MCF 10A (cell line): ENCODE measurements at regions of chr3 and their contacts with region 1.

Region 1: GRCh38 chr3:11271986-11272904 is at the start of gene ATG7:
- DNase-seq: peak; percentile 97
- H3K4me3 Mint-ChIP-seq: peak within 1 kb of the TSS; percentile 99
- H3K27ac Mint-ChIP-seq: peak within 1 kb of the TSS; percentile 99
- H3K4me1 Mint-ChIP-seq: peaks cover 42% of the 10 kb centered on the region
- H3K27me3 Mint-ChIP-seq: no peaks in the 10 kb centered on the region
- CTCF ChIP-seq: no peak
- total RNA-seq, gene ATG7: 52.3 and 54.0 TPM in 2 replicates

Region 2: DNA sequence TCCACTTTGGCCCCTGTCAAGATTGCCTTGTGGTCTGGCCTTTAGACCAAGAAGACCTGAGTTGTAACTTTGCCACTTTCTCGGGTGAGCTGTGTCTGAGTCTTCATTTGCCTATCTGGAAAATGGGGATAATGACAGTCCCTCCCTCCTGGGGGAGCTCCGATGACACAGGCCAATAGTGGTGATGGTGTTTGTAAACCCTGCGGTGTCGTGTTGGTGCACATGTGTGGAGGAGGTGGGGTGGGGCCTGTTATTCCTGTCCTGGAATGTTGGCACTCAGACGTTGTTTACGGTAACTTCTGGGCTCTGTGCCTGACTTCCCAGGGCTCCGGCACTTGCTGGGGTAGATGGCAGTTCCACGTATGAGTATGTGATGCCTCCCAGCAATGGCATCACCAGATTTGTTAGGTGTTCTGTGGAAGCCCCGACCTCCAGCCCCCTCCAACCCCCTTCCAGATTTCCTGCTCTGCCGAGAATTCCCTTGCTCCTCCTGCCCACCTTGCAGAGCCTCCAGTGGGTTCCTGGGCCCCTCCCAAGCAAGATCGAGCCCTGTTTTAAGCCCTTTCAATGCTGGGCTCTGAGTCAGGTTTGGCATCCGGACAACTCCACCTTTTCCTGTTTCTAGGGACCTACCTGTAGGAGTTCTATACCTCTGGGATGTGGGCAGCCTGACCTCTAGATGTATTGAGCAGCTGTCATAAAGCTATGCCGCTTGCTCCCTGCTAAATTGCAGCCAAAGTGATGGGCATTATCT is 86.5 kb before region 1 on chr3:
- CTCF ChIA-PET with region 1: no interaction called
- POLR2A ChIA-PET with region 1: interaction called, 8 read pairs
- intact Hi-C with region 1: loop called (anchors 5 kb)
- DNase-seq: peak; percentile 99
- H3K4me3 Mint-ChIP-seq: peak overlapping the region; percentile 75
- H3K27ac Mint-ChIP-seq: peak overlapping the region; percentile 100
- H3K4me1 Mint-ChIP-seq: peaks cover 36% of the 10 kb centered on the region
- H3K27me3 Mint-ChIP-seq: no peaks in the 10 kb centered on the region
- CTCF ChIP-seq: no peak

Region 3: GRCh38 chr3:11236595-11237461 is 35.4 kb before region 1 on chr3:
- CTCF ChIA-PET with region 1: interaction called, 5 read pairs
- POLR2A ChIA-PET with region 1: interaction called, 35 read pairs
- intact Hi-C with region 1: loop called (anchors 5 kb)
- DNase-seq: peak; percentile 82
- H3K4me3 Mint-ChIP-seq: no peak overlapping the region
- H3K27ac Mint-ChIP-seq: peak overlapping the region; percentile 49
- H3K4me1 Mint-ChIP-seq: peaks cover 26% of the 10 kb centered on the region
- H3K27me3 Mint-ChIP-seq: no peaks in the 10 kb centered on the region
- CTCF ChIP-seq: peak; percentile 95

Region 4: GRCh38 chr3:11244126-11244677 is 28.0 kb before region 1 on chr3:
- CTCF ChIA-PET with region 1: interaction called, 5 read pairs
- POLR2A ChIA-PET with region 1: interaction called, 35 read pairs
- intact Hi-C with region 1: loop called (anchors 5 kb)
- DNase-seq: peak; percentile 38
- H3K4me3 Mint-ChIP-seq: no peak overlapping the region
- H3K27ac Mint-ChIP-seq: peak overlapping the region; percentile 63
- H3K4me1 Mint-ChIP-seq: peaks cover 11% of the 10 kb centered on the region
- H3K27me3 Mint-ChIP-seq: no peaks in the 10 kb centered on the region
- CTCF ChIP-seq: no peak

Region 5: GRCh38 chr3:11282250-11283138 is 10.2 kb after region 1 on chr3:
- CTCF ChIA-PET with region 1: interaction called, 3 read pairs
- POLR2A ChIA-PET with region 1: interaction called, 82 read pairs
- intact Hi-C with region 1: no loop called
- DNase-seq: no peak
- H3K4me3 Mint-ChIP-seq: no peak overlapping the region
- H3K27ac Mint-ChIP-seq: no peak overlapping the region
- H3K4me1 Mint-ChIP-seq: peaks cover 17% of the 10 kb centered on the region
- H3K27me3 Mint-ChIP-seq: no peaks in the 10 kb centered on the region
- CTCF ChIP-seq: no peak

Region 6: DNA sequence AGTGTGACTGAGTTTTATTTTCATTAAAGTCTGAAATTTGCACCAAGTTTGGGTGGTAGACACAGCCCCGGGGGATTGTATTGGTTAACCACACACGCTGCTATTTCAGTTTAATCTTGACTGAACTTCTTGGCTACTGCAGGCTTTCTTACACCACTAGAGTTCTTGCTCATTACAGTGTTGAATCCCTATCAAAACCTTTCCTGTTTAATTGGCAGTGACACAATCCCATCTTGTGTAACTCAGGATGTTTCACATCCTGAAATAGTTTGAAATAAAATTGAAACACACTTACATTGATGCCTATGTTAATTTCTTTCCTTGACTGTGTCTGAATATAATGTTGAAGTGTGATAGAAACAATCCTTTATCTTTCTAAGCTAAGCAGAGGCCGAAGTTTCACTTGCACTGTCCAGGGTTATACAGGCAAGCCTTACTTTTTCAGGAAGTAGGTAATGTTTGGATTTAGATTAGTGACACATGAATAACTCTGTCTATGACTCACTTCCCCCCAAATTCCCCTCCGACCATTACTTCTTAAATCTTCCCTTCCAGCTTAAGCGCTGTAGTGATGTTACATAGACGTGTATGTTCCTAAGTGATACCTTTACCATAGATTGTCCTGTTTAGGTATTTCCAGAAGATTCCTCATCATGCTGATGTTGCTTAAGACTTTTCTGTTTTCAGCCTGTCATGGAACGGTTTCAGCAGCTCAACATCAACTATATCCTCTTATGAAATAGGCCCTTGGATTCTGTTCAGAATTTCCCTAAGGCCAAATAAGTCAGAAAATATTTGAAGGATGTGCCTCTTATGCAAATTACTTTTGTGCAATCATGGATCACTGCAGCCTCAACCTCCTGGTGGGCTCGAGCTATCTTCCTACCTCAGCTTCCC is 16.8 kb after region 1 on chr3:
- CTCF ChIA-PET with region 1: interaction called, 4 read pairs
- POLR2A ChIA-PET with region 1: interaction called, 82 read pairs
- intact Hi-C with region 1: loop called (anchors 1 kb)
- DNase-seq: peak; percentile 93
- H3K4me3 Mint-ChIP-seq: peak overlapping the region; percentile 40
- H3K27ac Mint-ChIP-seq: peak overlapping the region; percentile 89
- H3K4me1 Mint-ChIP-seq: peaks cover 39% of the 10 kb centered on the region
- H3K27me3 Mint-ChIP-seq: no peaks in the 10 kb centered on the region
- CTCF ChIP-seq: no peak

Region 7: GRCh38 chr3:11415099-11415498 is 142.9 kb after region 1 on chr3:
- CTCF ChIA-PET with region 1: no interaction called
- POLR2A ChIA-PET with region 1: no interaction called
- intact Hi-C with region 1: no loop called
- DNase-seq: no peak
- H3K4me3 Mint-ChIP-seq: no peak overlapping the region
- H3K27ac Mint-ChIP-seq: peak overlapping the region; percentile 66
- H3K4me1 Mint-ChIP-seq: peaks cover 6% of the 10 kb centered on the region
- H3K27me3 Mint-ChIP-seq: no peaks in the 10 kb centered on the region
- CTCF ChIP-seq: no peak

Region 8: GRCh38 chr3:12719984-12720898 is 1448.0 kb after region 1 on chr3:
- CTCF ChIA-PET with region 1: no interaction called
- POLR2A ChIA-PET with region 1: no interaction called
- intact Hi-C with region 1: no loop called
- DNase-seq: peak; percentile 84
- H3K4me3 Mint-ChIP-seq: no peak overlapping the region
- H3K27ac Mint-ChIP-seq: peak overlapping the region; percentile 63
- H3K4me1 Mint-ChIP-seq: peaks cover 15% of the 10 kb centered on the region
- H3K27me3 Mint-ChIP-seq: no peaks in the 10 kb centered on the region
- CTCF ChIP-seq: peak; percentile 84